Lower leg skin (tissue), 4 donors: ENCODE measurements at regions of chr4 and their contacts with region 1.

Region 1: DNA sequence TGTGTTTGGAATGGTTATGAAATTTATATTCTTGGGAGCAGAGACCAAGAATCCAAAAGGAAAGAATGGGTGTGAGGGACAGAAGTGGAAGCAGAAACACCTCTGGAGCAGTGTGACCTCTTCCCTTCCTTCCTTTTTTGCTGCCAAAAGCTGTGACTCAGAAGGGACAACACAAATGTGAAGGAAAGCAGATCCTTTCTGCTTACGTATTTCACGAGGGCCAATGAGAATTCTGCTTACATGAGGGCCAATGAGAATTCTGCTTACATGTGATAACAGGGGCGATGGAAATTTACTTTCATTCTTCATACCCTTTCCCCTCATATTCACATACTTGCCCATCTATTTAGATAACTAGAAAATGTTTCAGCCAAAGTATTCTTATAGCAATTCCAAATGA is 404.6 kb downstream of the PRDM5 start:
- DNase-seq: no peak
- H3K4me3 ChIP-seq: no peak overlapping the region
- CTCF ChIP-seq: no peak
- POLR2A ChIP-seq: no peak

Region 2: DNA sequence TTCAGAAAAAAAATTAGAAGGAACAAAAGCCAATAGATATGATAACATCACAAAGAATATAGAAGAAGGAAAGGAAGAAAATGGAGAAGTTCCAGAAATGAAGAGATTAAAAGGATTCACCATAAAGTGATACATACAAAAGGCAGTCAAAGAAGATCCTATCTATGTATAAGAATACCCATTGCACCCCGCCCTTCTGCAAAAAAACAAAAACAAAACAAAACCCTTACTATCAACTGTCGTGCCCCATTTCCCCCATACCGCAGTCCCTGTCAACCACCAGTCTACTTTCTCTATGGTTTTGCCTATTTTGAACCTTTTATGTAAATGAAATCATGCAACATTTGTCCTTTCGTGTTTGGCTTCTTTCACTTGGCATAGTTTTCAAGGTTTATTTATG is 18.9 kb after region 1 on chr4:
- intact Hi-C with region 1: loop called (anchors 1 kb)
- DNase-seq: no peak
- H3K4me3 ChIP-seq: no peak overlapping the region
- CTCF ChIP-seq: no peak
- POLR2A ChIP-seq: no peak